Motor neuron (in vitro differentiated cells): ENCODE measurements at regions of chr4 and their contacts with region 1.

Region 1: GRCh38 chr4:2241410-2242353 is at the starts of genes HAUS3 and POLN:
- ATAC-seq: peak; percentile 85 to 94 (median 92)
- H3K4me3 ChIP-seq: peak within 1 kb of the TSS; percentile 62 to 81 (median 67)
- H3K27ac ChIP-seq: peak within 1 kb of the TSS in 1 of 2 donors; percentile 49
- H3K4me1 ChIP-seq: peaks cover 18 to 35% of the 10 kb centered on the region in 2 donors
- total RNA-seq, gene HAUS3: 6.0 to 18.5 (median 10.2) TPM
- total RNA-seq, gene POLN: 0.81 to 5.3 (median 2.7) TPM

Region 2: DNA sequence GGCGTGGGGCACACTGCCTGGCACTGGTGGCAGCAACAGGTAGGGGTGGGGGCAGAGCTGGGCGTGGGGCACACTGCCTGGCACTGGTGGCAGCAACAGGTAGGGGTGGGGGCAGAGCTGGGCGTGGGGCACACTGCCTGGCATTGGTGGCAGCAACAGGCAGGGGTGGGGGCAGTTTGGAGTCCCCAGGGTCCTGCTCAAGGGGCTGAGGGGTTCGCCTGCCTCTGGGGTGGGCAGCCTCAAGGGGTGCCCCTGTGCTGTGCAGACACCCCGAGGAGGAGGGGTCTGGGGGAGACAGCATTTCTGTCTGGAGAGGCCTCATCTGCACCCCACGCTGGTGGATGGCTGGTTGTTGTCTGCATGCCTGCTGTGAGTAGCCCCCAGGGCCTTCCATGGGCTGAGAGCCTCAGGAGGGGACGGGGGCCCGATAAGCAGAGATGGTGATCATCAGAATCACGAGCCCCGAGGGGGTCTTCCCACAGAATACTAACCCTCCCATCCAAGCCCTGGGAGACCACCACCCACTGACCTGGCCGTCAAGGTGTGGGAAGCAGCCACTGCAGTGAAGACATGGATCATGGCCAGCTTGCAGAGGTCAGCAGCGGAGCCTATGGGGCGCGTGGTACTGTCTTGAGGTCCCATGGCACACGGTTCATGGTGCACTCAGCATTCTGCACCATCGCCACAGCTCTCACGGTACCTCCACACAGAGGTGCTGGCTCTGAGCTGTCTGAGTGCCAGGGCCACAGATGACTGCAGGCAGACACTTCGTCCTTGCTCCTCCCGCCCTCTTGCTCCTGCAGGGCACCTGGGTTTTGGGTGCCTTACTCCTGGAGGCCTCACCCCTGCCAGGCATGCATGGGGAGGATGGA is 161.0 kb before region 1 on chr4:
- in situ Hi-C with region 1: no loop called
- ATAC-seq: peak in 3 of 8 experiments; percentile 34 to 50 (median 41)
- H3K4me3 ChIP-seq: no peak overlapping the region
- H3K27ac ChIP-seq: no peak overlapping the region
- H3K4me1 ChIP-seq: no peaks in the 10 kb centered on the region

Region 3: GRCh38 chr4:2418650-2419571 is 177.2 kb after region 1 on chr4 and contains the start of gene CFAP99:
- in situ Hi-C with region 1: loop called in 1 of 9 experiments (anchors 25 kb)
- ATAC-seq: peak; percentile 85 to 94 (median 90)
- H3K4me3 ChIP-seq: peak within 1 kb of the TSS; percentile 43 to 89 (median 59)
- H3K27ac ChIP-seq: no peak within 1 kb of the TSS
- H3K4me1 ChIP-seq: peaks cover 8 to 9% of the 10 kb centered on the region in 2 donors
- total RNA-seq, gene CFAP99: 0.05 to 9.1 (median 0.19) TPM